K562 (cell line): ENCODE measurements at regions of chr17 and their contacts with region 1.

Region 1: GRCh38 chr17:61551255-61551742 is 39.7 kb downstream of the NACA2 start:
- DNase-seq: peak; percentile 10 to 38 (median 16)
- ATAC-seq: peak; percentile 60; the same call in 1 of the 3 replicates
- H3K4me3 ChIP-seq: no peak overlapping the region
- H3K27ac ChIP-seq: no peak overlapping the region
- H3K4me1 ChIP-seq: no peaks in the 10 kb centered on the region
- H3K27me3 ChIP-seq: peaks cover 8 to 11% of the 10 kb centered on the region in 2 experiments; a peak in 3 of 5 replicates
- CTCF ChIP-seq: peak; percentile 44 to 78 (median 49); a peak in 5 of 6 replicates
- EP300 ChIP-seq: no peak
- POLR2A ChIP-seq: no peak
- RAD21 ChIP-seq: peak; percentile 70 to 81

Region 2: DNA sequence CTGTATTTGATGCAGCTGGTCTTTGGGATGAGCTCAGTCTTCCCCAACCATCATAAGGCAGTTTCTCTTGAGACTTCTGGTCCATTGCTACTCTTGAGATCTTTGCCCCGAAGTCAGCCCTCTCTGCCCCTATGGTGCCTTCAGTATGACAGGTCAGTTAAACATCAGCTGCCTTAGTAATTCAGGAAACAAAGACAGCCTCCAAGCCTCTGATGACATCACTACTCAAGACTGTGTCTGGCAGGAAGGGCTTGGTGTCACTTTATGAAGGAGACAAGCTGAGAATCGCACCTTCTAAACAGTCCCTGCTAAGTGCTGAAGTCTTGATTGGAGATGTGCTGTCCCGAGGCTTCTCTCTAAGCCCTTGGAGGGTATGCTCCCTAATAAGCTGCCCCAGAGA is 256.5 kb before region 1 on chr17:
- CTCF ChIA-PET with region 1: no interaction called
- POLR2A ChIA-PET with region 1: no interaction called
- in situ Hi-C with region 1: no loop called
- intact Hi-C with region 1: no loop called
- DNase-seq: no peak
- ATAC-seq: no peak
- H3K4me3 ChIP-seq: no peak overlapping the region
- H3K27ac ChIP-seq: no peak overlapping the region
- H3K4me1 ChIP-seq: no peaks in the 10 kb centered on the region
- H3K27me3 ChIP-seq: peaks cover 10 to 26% of the 10 kb centered on the region in 2 experiments; a peak in 4 of 5 replicates
- CTCF ChIP-seq: no peak
- EP300 ChIP-seq: no peak
- POLR2A ChIP-seq: no peak
- RAD21 ChIP-seq: no peak

Region 3: GRCh38 chr17:61420052-61420451 is 131.2 kb before region 1 on chr17:
- CTCF ChIA-PET with region 1: no interaction called
- POLR2A ChIA-PET with region 1: interaction called, 3 read pairs
- in situ Hi-C with region 1: loop called (anchors 5 kb)
- intact Hi-C with region 1: no loop called
- DNase-seq: peak in 1 of 4 experiments; percentile 2
- ATAC-seq: no peak
- H3K4me3 ChIP-seq: no peak overlapping the region
- H3K27ac ChIP-seq: no peak overlapping the region
- H3K4me1 ChIP-seq: peaks cover 0 to 10% of the 10 kb centered on the region in 2 experiments; a peak in 4 of 5 replicates
- H3K27me3 ChIP-seq: peaks cover 7 to 28% of the 10 kb centered on the region in 2 experiments; a peak in 4 of 5 replicates
- CTCF ChIP-seq: no peak
- EP300 ChIP-seq: no peak
- POLR2A ChIP-seq: no peak
- RAD21 ChIP-seq: no peak

Region 4: DNA sequence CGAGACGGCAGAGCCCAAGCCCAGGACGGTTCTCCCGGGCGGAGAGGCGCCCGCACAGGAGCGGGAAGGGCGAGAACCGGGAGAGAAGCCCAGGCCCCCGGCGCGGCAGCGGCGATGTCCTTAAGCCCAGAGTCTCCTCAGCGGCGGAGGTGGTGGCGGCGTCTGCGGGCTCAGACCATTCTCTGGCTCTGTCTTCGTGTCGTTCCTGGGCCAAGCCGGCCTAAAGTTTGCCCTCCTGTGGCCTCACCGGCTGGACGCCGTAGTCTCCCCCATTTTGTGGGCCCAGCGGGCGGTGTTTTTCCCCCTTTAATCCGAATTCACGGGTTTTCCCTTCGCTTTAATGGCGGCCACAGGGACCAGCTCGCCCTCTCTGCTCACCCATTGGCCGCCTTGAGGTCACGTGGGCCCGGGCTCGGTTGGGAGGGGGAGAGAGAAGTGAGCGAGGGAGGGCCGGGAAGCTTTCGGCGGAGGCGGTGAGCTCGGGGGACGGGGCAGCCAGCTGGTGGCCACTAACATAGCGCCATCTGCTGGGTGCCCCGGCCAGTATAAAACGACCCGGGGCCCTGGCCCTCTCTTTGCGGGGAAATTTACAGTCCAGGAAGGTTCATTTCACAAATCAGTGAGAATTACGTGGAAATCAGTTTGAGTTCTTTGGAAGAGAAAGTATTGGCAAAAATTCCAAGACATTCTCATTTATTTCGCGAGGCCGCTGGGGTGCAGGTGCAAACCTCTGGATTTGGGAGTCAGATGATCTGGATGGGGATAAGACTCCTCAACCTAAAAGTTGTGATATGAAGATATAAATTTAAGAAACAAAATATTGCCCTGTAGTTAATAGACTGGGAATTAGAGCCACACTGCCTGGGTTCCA is 514.5 kb after region 1 on chr17:
- CTCF ChIA-PET with region 1: no interaction called
- POLR2A ChIA-PET with region 1: no interaction called
- in situ Hi-C with region 1: no loop called
- intact Hi-C with region 1: no loop called
- DNase-seq: peak; percentile 98 to 99 (median 98)
- ATAC-seq: peak; percentile 96
- H3K4me3 ChIP-seq: peak overlapping the region; percentile 86
- H3K27ac ChIP-seq: peak overlapping the region; percentile 99
- H3K4me1 ChIP-seq: peaks cover 4 to 10% of the 10 kb centered on the region in 2 experiments; a peak in 3 of 5 replicates
- H3K27me3 ChIP-seq: no peaks in the 10 kb centered on the region
- CTCF ChIP-seq: peak; percentile 85 to 94 (median 91)
- EP300 ChIP-seq: no peak; the same call in 1 of the 2 replicates
- POLR2A ChIP-seq: peak; percentile 95
- RAD21 ChIP-seq: peak; percentile 55 to 67